Sigmoid colon (tissue), 7 donors: ENCODE measurements at regions of chr4 and their contacts with region 1.

Region 1: DNA sequence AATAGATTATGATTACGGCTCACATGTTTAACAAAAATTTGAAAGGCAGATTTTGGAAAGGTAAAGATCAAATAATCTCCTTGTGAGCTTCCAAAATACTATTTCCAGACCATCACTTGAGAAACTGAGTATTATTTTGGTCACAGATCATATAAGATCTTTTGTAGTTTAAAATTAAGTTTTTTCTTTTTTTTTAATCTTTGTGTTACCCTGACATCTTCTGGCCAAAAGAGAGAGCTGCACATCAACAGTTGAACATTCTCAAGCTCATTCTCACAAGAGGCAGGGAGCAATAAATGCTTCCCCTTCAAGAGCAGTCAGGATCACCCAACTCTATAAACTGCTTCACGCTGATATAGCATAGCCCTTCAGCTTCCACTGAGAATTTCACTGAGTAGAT is 15.9 kb downstream of the TMEM192 start:
- DNase-seq: no peak
- H3K4me3 ChIP-seq: no peak overlapping the region
- H3K27ac ChIP-seq: no peak overlapping the region
- H3K4me1 ChIP-seq: no peaks in the 10 kb centered on the region
- H3K27me3 ChIP-seq: no peaks in the 10 kb centered on the region
- CTCF ChIP-seq: peak in 2 of 4 experiments; percentile 6 to 46
- EP300 ChIP-seq: no peak
- POLR2A ChIP-seq: no peak

Region 2: DNA sequence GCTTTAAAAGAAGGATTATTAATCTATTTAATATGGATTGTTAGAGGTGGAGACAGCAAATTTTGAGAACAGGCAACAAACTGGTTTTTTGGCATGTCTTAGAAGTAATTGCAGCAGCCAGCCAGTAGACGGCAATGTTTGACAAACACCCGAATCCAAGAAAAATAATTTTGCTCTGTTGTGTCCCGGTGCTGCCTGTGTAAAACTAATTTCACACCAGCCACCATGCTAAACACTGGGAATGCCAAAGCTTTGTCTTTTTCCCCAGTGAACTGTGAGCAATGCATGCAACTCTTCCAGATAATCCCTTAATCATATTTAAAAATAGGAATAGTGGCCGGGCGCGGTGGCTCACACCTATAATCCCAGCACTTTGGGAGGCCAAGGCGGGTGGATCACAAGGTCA is 317.0 kb before region 1 on chr4:
- intact Hi-C with region 1: loop called (anchors 10 kb)
- DNase-seq: no peak
- H3K4me3 ChIP-seq: no peak overlapping the region
- H3K27ac ChIP-seq: no peak overlapping the region
- H3K4me1 ChIP-seq: no peaks in the 10 kb centered on the region
- H3K27me3 ChIP-seq: no peaks in the 10 kb centered on the region
- CTCF ChIP-seq: peak in 3 of 4 experiments; percentile 28 to 72 (median 28)
- EP300 ChIP-seq: no peak
- POLR2A ChIP-seq: no peak

Region 3: GRCh38 chr4:164876700-164877324 is 220.0 kb before region 1 on chr4 and contains the start of gene APELA:
- intact Hi-C with region 1: no loop called
- DNase-seq: no peak
- H3K4me3 ChIP-seq: no peak within 1 kb of the TSS
- H3K27ac ChIP-seq: no peak within 1 kb of the TSS
- H3K4me1 ChIP-seq: no peaks in the 10 kb centered on the region
- H3K27me3 ChIP-seq: no peaks in the 10 kb centered on the region
- CTCF ChIP-seq: no peak
- EP300 ChIP-seq: no peak
- POLR2A ChIP-seq: no peak
- total RNA-seq, gene APELA: 0.27 TPM in 1 of 4 donors, not detected in the others

Region 4: GRCh38 chr4:165398570-165398969 is 301.8 kb after region 1 on chr4:
- intact Hi-C with region 1: no loop called
- DNase-seq: no peak
- H3K4me3 ChIP-seq: no peak overlapping the region
- H3K27ac ChIP-seq: no peak overlapping the region
- H3K4me1 ChIP-seq: no peaks in the 10 kb centered on the region
- H3K27me3 ChIP-seq: no peaks in the 10 kb centered on the region
- CTCF ChIP-seq: no peak
- EP300 ChIP-seq: no peak
- POLR2A ChIP-seq: no peak

Region 5: DNA sequence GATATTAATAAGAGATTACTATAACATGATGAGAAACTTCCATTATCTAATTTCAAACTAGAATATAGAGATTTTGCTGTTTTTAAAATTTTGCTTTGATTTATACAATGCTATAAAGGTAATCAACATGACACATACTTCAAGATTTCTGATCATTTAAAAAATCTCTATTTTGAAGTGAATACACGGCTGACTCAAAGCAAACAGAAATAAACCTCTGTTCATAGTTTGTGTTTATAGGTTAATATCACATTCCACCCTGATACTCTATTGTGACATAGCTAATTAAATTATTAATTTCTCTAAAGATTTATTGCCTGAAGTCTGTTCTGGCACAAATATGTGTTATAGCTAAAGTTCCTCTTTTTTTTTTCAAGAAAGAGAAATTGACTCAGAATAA is 1125.5 kb after region 1 on chr4:
- intact Hi-C with region 1: no loop called
- DNase-seq: no peak
- H3K4me3 ChIP-seq: no peak overlapping the region
- H3K27ac ChIP-seq: no peak overlapping the region
- H3K4me1 ChIP-seq: no peaks in the 10 kb centered on the region
- H3K27me3 ChIP-seq: no peaks in the 10 kb centered on the region
- CTCF ChIP-seq: no peak
- EP300 ChIP-seq: no peak
- POLR2A ChIP-seq: no peak